ENCODE measurements at regions of chr12 and their contacts with region 1.

Region 1: DNA sequence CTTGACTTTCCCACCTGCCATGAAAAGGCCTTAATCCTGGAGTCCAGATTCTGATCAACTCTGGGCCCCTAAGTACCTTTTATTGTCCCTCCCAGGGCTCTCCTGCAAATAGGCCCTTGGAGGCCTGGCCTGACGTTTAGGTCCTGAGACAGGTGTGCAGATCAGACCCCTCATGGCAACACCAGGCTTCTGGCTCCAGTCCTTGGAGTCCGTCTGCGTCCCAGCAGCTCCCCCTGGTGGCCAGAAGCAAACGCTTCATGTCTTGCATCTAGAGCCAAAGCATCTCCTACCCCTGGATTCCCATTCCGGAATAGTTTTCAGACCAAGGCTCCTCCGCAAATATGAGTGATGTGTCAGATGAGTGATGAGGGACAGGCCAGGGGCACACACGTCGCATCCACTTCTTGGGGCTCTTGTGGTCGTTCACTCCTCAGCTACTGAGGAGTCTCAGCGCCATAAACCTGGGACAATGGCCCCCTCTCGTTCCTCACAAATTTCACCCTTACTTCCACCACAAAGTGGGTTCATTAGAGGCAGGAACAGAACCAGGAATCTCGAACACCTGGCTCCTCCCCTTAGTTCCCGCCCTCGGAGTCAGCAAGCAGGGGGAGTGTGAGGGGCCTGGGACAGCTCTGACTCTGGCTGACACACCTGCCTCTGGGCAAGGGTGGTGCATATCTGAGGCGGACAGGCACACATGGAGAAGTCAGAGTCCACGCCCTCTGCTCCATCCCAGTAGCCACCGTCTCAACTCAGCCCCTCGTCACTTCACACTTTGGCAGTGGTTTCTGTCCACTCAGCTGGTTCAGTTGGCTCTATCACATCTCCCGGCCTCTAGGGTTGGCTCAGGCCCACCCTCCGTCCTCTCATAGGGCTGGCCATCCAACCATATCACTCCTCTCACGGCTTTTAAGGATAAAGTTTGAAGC is 77.9 kb upstream of the PWP1 start:
- DNase-seq: peak in 1 of 2 donors; percentile 70
- H3K4me3 ChIP-seq: no peak overlapping the region
- H3K27ac ChIP-seq: no peak overlapping the region
- H3K4me1 ChIP-seq: no peaks in the 10 kb centered on the region
- H3K27me3 ChIP-seq: no peaks in the 10 kb centered on the region
- CTCF ChIP-seq: peak; percentile 50 to 73 (median 55)

Region 2: DNA sequence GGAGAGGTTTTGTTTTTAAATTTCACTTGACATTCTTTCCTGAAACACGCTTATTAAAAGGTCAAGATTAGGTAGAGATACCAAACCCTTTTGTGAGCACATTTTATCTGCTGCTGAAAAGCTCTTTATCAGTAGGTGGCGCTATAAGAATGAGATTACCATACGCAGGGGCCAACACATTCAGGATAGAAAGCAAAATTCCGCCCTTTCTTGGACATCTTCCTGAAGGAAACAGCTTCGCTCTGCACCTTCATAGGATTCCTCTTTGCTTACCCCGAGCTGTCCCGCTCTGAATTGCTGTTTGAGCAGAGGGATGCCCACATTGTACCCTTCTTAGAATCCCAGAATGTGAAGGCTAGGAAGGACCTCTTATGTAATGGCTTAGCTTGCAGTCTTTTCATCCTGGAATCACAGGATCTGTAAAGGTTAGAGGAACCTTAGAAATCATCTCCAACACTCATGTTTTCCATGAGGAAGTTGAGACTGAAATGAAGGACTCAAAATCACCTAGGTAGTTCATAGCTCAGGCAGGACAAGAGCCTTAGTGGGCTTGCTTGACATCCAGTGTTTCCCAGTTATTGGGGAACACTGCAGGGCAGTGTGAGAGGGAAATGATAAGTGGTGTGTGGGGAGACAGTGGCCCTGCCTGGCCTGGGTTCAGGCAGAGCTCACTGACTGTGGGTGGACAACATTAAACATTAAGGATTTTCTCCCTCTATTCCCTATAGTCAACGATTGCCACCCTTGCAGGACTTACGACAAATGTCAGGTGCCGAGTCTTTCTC is 475.7 kb before region 1 on chr12:
- intact Hi-C with region 1: loop called (anchors 1 kb)
- DNase-seq: no peak
- H3K4me3 ChIP-seq: no peak overlapping the region
- H3K27ac ChIP-seq: no peak overlapping the region
- H3K4me1 ChIP-seq: no peaks in the 10 kb centered on the region
- H3K27me3 ChIP-seq: no peaks in the 10 kb centered on the region
- CTCF ChIP-seq: peak; percentile 28 to 71 (median 52)

Region 3: DNA sequence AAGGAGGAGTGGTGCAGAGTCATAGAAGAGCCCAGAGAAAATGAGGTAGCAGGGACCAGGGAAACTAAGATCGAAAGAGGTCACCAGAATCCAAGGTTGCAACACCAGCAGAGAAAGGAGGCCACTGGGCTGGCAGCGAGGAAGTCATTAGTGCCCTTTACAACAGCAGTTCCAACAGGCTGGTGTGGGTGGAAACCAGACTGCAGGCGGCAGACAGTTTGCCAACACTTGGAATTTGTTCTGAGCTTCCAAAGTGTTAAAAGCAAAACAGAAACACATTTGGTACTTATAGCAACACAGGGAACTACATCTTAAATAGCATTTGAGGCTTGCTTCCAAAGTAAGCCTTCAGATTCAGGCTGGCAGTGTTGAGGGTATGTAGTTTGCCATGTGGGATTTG is 17.3 kb before region 1 on chr12:
- intact Hi-C with region 1: no loop called
- DNase-seq: no peak
- H3K4me3 ChIP-seq: no peak overlapping the region
- H3K27ac ChIP-seq: no peak overlapping the region
- H3K4me1 ChIP-seq: no peaks in the 10 kb centered on the region
- H3K27me3 ChIP-seq: no peaks in the 10 kb centered on the region
- CTCF ChIP-seq: no peak

Region 4: DNA sequence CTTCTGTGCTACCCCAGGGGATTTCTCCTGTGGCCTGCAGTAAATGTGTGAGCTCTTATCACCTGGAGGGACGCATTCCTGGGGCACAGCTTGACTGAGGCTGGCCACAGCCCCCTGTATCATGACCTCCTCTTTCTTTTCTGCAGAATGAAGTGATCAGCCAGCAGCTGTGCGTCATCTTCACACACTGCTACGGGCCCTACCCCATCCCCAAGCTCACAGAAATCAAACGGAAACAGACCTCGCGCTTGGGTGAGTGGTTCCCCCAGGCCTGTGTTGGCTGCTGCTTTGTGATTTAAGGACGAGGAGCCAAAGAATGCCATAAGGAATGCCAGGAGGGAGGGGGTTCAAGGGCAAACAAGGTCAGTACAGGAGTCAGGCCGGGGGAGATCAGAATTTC is 27.4 kb after region 1 on chr12:
- intact Hi-C with region 1: no loop called
- DNase-seq: no peak
- H3K4me3 ChIP-seq: no peak overlapping the region
- H3K27ac ChIP-seq: no peak overlapping the region
- H3K4me1 ChIP-seq: no peaks in the 10 kb centered on the region
- H3K27me3 ChIP-seq: no peaks in the 10 kb centered on the region
- CTCF ChIP-seq: no peak

Measured in ascending aorta (tissue), 2 donors.